ENCODE measurements at regions of chr22 and their contacts with region 1.

Region 1: DNA sequence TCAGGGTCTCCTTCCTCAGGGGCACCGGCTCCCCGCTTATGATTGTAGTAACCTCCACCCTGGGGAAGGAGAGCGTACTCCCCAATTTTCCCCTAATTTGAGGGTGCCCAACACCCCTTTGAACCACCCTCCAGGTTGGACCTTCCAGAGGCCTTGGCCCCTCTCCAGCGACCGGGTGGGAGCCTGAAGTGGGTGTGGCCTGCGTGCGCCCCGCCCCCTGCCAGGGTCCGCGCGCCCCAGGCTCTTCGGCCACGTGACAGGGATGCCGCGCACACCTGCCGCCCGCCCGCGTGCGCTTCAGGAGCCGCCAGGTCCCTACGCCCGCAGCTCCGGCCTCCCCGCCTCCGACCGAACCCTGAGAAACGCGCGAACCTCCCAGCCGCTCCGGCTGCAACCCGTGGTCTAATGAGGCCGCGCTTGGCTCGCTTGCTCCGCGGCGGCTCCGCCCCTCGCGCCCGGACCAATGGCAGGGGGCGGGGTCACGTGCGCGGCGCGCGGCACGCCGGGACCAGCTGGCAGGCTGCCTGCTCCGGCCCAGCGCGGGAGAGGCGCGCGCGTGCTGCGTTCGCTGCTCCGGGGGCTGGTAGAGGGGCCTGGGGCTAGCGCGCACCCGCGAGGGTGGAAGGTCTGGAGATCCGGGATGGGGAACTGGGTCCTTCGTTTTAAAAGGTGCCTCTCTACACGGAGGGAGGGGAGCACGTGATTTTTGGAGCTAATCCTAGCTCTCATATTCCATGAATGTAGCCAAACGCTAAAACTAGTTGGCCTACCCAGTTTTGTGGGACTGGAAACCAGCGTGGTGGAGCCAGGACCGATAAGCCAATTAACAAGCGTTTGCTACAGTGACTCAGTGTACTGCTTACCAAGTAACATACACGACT is at the start of gene FOXRED2:
- DNase-seq: peak; percentile 94
- ATAC-seq: peak; percentile 95
- H3K4me3 Mint-ChIP-seq: peak within 1 kb of the TSS; percentile 49
- H3K27ac Mint-ChIP-seq: peak within 1 kb of the TSS; percentile 58
- H3K4me1 Mint-ChIP-seq: peaks cover 13% of the 10 kb centered on the region
- H3K27me3 Mint-ChIP-seq: no peaks in the 10 kb centered on the region
- total RNA-seq, gene FOXRED2: 15.7 to 16.6 TPM

Region 2: DNA sequence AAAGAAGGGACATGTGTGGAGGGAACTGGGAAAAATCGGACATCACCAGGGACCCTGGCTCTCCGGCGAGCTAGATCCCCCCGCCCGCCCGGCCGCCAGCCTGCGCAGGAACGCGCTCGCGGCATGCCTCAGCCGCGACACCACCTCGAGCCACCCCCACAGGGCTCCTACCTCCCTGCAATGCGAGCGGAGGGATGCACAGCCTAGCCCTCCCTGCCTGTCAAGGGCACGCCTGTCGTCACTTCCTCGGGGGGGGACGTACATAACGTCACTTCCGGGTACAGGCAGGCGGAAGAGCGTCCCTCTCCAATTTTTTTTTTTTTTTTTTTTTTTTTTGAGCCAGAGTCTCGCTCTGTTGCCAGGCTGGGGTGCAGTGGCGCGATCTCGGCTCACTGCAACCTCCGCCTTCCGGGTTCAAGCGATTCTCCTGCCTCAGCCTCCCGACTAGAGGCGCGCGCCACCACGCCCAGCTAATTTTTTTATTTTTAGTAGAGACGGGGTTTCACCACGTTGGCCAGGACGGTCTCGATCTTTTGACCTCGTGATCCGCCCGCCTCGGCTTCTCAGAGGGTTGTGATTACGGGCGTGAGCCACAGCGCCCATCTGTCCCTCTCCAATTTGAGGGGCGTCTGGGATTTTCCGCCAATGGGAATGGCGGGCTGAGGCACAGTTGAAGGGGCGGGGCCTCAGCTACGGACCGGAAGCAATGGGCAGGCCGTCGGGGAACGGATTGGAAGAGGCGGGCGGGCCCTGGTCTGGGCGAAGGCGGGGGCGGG is 25.3 kb before region 1 on chr22 and contains the start of gene TXN2:
- CTCF ChIA-PET with region 1: interaction called, 4 read pairs
- POLR2A ChIA-PET with region 1: interaction called, 10 read pairs
- intact Hi-C with region 1: loop called in 1 of 2 experiments (anchors 1 kb)
- DNase-seq: peak; percentile 97
- ATAC-seq: peak; percentile 89
- H3K4me3 Mint-ChIP-seq: peak within 1 kb of the TSS; percentile 81
- H3K27ac Mint-ChIP-seq: peak within 1 kb of the TSS; percentile 94
- H3K4me1 Mint-ChIP-seq: peaks cover 19% of the 10 kb centered on the region
- H3K27me3 Mint-ChIP-seq: no peaks in the 10 kb centered on the region
- total RNA-seq, gene TXN2: 95.5 to 99.1 TPM

Region 3: DNA sequence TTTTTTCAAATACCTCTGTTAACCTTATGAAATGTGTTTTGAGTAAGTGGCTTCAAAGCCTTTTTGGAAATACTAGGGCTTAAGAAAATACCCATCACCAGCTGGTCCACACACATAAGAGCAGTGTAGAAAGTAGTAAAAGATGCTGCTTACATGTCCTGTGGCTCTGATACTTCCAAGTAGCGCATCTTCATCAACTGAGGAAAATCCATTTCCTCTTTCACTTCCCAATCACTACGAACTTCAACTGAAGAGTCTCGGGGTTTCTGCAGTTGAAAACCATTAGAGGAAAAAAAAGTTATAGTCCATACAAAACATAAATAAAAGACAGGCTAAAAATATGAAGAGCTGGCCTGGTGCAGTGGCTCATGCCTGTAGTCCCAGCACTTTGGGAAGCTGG is 13.5 kb after region 1 on chr22:
- CTCF ChIA-PET with region 1: interaction called, 29 read pairs
- POLR2A ChIA-PET with region 1: no interaction called
- intact Hi-C with region 1: no loop called
- DNase-seq: no peak
- ATAC-seq: no peak
- H3K4me3 Mint-ChIP-seq: no peak overlapping the region
- H3K27ac Mint-ChIP-seq: no peak overlapping the region
- H3K4me1 Mint-ChIP-seq: peaks cover 5% of the 10 kb centered on the region
- H3K27me3 Mint-ChIP-seq: no peaks in the 10 kb centered on the region

Region 4: GRCh38 chr22:36636916-36637315 is 130.0 kb after region 1 on chr22:
- CTCF ChIA-PET with region 1: no interaction called
- POLR2A ChIA-PET with region 1: no interaction called
- intact Hi-C with region 1: no loop called
- DNase-seq: no peak
- ATAC-seq: no peak
- H3K4me3 Mint-ChIP-seq: no peak overlapping the region
- H3K27ac Mint-ChIP-seq: no peak overlapping the region
- H3K4me1 Mint-ChIP-seq: no peaks in the 10 kb centered on the region
- H3K27me3 Mint-ChIP-seq: peaks cover 57% of the 10 kb centered on the region

Region 5: GRCh38 chr22:36977947-36978660 is 471.2 kb after region 1 on chr22:
- CTCF ChIA-PET with region 1: no interaction called
- POLR2A ChIA-PET with region 1: no interaction called
- intact Hi-C with region 1: no loop called
- DNase-seq: peak; percentile 95
- ATAC-seq: peak; percentile 86
- H3K4me3 Mint-ChIP-seq: peak overlapping the region; percentile 76
- H3K27ac Mint-ChIP-seq: peak overlapping the region; percentile 77
- H3K4me1 Mint-ChIP-seq: peaks cover 8% of the 10 kb centered on the region
- H3K27me3 Mint-ChIP-seq: no peaks in the 10 kb centered on the region